Activated CD8-positive, alpha-beta T cell treated with anti-CD3 and anti-CD28 coated beads for 36 hours (primary cell): ENCODE measurements at regions of chr2 and their contacts with region 1.

Region 1: GRCh38 chr2:136378712-136379595 is 261.0 kb upstream of the CXCR4 start:
- DNase-seq: peak; percentile 86
- ATAC-seq: no peak
- H3K4me3 Mint-ChIP-seq: no peak overlapping the region
- H3K27ac Mint-ChIP-seq: no peak overlapping the region
- H3K4me1 Mint-ChIP-seq: peaks cover 82% of the 10 kb centered on the region
- H3K27me3 Mint-ChIP-seq: no peaks in the 10 kb centered on the region
- CTCF ChIP-seq: peak; percentile 90

Region 2: GRCh38 chr2:135202756-135203155 is 1176.2 kb before region 1 on chr2:
- CTCF ChIA-PET with region 1: no interaction called
- POLR2A ChIA-PET with region 1: no interaction called
- intact Hi-C with region 1: no loop called
- DNase-seq: no peak
- ATAC-seq: no peak
- H3K4me3 Mint-ChIP-seq: no peak overlapping the region
- H3K27ac Mint-ChIP-seq: no peak overlapping the region
- H3K4me1 Mint-ChIP-seq: no peaks in the 10 kb centered on the region
- H3K27me3 Mint-ChIP-seq: no peaks in the 10 kb centered on the region
- CTCF ChIP-seq: no peak

Region 3: DNA sequence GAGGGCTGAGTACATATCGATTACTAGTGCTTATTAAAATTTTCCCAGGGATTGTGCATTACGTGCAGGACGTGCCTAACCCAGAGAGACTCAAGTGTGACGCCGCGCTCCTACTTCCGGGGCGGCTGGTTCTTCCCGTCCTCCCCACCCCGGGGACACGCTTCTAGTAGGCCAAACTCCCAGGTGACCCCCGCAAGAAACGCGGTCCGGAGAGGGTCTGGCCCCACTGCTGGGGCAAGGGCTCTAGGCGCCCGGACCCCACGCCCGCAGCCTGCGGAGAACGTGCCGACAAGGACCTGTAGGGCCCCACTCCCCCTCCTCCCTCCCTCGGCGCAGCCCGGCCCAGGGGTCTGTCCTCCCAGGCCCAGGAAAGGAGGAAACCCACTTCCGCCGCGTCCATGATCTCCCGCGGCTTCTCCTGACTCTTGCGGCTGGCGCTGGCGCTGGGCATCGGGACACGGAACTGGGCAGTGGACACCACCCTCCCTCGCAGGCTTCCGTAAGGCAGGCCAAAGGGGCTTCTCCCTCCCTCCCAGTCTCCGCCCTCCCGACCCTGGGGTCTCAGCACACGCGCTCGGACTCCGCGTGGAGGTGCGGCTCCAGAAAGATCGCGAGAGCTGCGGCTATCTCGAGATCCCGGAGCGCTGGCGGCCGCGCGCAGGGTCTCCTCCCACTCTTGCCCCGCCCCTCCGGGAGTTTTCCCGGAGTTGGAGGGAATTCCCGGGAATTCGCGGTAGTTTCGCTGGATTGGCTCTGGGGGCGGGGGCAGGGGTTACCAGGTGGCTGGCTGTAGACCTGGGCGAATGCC is 393.7 kb before region 1 on chr2 and contains the start of gene DARS1:
- CTCF ChIA-PET with region 1: interaction called, 5 read pairs
- POLR2A ChIA-PET with region 1: interaction called, 6 read pairs
- intact Hi-C with region 1: loop called (anchors 5 kb)
- DNase-seq: peak; percentile 93
- ATAC-seq: peak; percentile 85
- H3K4me3 Mint-ChIP-seq: peak within 1 kb of the TSS; percentile 90
- H3K27ac Mint-ChIP-seq: peak within 1 kb of the TSS; percentile 97
- H3K4me1 Mint-ChIP-seq: peaks cover 45% of the 10 kb centered on the region
- H3K27me3 Mint-ChIP-seq: no peaks in the 10 kb centered on the region
- CTCF ChIP-seq: no peak
- total RNA-seq, gene DARS1: 210 to 211 TPM

Region 4: DNA sequence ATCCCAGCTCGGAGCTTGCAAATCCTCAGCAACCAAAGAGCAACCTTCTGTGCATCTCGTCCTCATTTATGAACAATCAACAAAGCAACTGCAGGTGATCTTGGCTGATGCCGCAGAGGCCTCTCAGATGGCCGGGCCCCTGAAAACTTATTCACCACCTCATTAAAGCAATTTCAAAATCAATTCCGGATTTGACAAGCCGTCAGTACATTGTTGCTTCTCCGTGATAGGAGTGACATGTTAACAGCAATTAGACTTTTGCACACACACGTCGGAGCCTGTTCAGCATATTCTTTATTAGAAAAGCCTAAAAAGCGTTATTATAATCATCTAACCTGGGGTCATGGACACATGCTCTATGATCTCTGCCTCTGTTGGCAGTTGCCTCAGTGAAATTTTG is 77.9 kb before region 1 on chr2:
- CTCF ChIA-PET with region 1: interaction called, 4 read pairs
- POLR2A ChIA-PET with region 1: interaction called, 4 read pairs
- intact Hi-C with region 1: loop called (anchors 5 kb)
- DNase-seq: no peak
- ATAC-seq: no peak
- H3K4me3 Mint-ChIP-seq: no peak overlapping the region
- H3K27ac Mint-ChIP-seq: no peak overlapping the region
- H3K4me1 Mint-ChIP-seq: peaks cover 18% of the 10 kb centered on the region
- H3K27me3 Mint-ChIP-seq: no peaks in the 10 kb centered on the region
- CTCF ChIP-seq: no peak